A549 (cell line): ENCODE measurements at regions of chr19 and their contacts with region 1.

Region 1: DNA sequence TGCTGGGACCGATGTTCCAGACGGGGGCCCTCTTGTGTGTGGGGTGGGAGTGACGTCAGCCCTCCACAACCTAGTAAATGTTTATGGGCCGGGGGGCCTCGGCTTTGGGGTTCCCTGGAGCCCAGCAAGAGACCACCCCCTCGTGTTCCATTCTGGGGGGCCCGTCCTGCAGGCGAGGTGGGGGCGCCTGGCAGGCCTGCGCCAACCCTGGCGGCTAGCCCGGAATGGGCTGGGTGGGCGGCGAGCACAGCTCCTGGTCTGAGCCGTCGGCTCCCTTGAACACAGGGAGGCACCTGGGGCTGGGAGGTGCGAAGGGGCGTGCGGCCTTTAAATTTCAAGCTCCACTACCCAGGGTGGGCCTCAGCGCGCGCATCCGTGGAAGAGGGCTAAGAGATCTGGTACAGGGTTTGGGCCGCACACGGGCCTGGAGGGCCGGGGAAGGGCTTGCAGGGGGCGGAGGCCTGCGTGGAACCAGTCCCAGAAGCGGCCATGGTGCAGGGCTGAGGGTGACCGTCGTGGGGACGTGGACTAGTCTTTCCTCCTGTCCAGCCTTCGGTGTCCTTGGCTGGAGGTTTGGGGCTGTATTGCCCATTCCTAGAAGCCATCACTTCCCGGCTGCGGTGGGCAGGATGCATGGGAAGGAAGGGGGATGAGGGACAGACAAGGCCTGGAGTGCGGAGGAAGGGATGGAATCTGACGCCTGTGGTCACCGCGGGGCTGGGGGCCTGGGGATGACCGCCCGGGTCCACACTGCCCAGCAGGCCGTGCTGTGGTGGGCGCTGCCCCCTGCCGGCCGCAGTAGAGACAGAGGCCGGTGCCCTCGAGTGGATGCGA is 11.4 kb downstream of the NDUFA11 start:
- DNase-seq: peak; percentile 33 to 46
- ATAC-seq: peak; percentile 69 to 89
- H3K4me3 ChIP-seq: no peak overlapping the region
- H3K27ac ChIP-seq: peak overlapping the region in 1 of 2 experiments; percentile 50; a peak in 2 of 6 replicates
- H3K4me1 ChIP-seq: 0 out of 3 replicates have a peak, but pooled peaks cover 3% of the 10 kb centered on the region
- CTCF ChIP-seq: peak; percentile 64
- EP300 ChIP-seq: no peak
- POLR2A ChIP-seq: no peak
- RAD21 ChIP-seq: peak; percentile 72 to 80

Region 2: GRCh38 chr19:5775668-5776309 is 116.4 kb before region 1 on chr19:
- CTCF ChIA-PET with region 1: interaction called, 14 read pairs
- POLR2A ChIA-PET with region 1: no interaction called
- DNase-seq: peak in 1 of 2 experiments; percentile 37
- ATAC-seq: peak; percentile 18 to 49; a peak in 1 of 6 replicates
- H3K4me3 ChIP-seq: no peak overlapping the region
- H3K27ac ChIP-seq: no peak overlapping the region; a peak in 1 of 6 replicates
- H3K4me1 ChIP-seq: peaks cover 5% of the 10 kb centered on the region; the same call in 1 of the 3 replicates
- CTCF ChIP-seq: no peak
- EP300 ChIP-seq: no peak
- POLR2A ChIP-seq: no peak
- RAD21 ChIP-seq: no peak

Region 3: DNA sequence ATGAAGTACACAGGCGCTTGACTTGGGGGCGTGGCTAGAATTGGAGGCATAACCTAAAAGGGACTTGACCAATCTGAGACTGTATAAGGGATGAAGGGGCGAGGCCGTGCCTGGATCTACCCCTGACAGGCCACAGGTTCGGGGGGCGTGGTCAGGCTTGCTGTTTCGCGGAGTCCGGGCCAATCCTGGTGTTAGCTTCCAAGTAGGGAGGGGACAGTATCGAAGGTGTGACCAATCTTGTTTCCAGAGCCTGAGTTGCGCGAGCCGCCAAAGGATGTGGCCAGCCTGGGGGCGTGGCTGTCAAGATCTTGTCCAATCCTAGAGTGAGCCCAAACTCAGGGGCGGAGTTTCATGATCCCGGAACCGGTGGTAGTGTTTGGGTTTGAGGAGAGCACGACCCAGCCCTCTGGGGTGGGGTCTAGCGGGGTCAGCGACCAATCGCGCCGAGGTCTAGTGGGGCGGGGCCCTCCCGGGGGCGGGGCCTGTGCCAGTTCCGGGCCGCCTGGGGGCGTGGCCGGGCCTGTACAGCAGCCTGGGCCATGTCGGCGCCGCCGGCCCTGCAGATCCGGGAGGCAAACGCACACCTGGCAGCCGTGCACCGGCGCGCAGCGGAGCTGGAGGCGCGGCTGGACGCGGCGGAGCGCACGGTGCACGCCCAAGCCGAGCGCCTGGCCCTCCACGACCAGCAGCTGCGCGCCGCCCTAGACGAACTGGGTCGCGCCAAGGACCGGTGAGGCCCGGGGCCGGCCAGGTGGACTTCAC is 12.4 kb after region 1 on chr19 and contains the start of gene VMAC:
- CTCF ChIA-PET with region 1: interaction called, 19 read pairs
- POLR2A ChIA-PET with region 1: interaction called, 3 read pairs
- DNase-seq: peak; percentile 89 to 100
- ATAC-seq: peak; percentile 83 to 87
- H3K4me3 ChIP-seq: peak within 1 kb of the TSS; percentile 99
- H3K27ac ChIP-seq: peak within 1 kb of the TSS; percentile 95 to 98
- H3K4me1 ChIP-seq: peaks cover 5% of the 10 kb centered on the region; the same call in 1 of the 3 replicates
- CTCF ChIP-seq: no peak
- EP300 ChIP-seq: no peak
- POLR2A ChIP-seq: peak; percentile 47; the same call in 1 of the 2 replicates
- RAD21 ChIP-seq: no peak
- polyA plus RNA-seq, gene VMAC: 1.1 and 1.5 TPM in 2 replicates

Region 4: GRCh38 chr19:5961969-5962945 is 70.1 kb after region 1 on chr19:
- CTCF ChIA-PET with region 1: no interaction called
- POLR2A ChIA-PET with region 1: no interaction called
- DNase-seq: no peak
- ATAC-seq: no peak; a peak in 1 of 6 replicates
- H3K4me3 ChIP-seq: no peak overlapping the region
- H3K27ac ChIP-seq: no peak overlapping the region
- H3K4me1 ChIP-seq: peaks cover 6% of the 10 kb centered on the region; the same call in 1 of the 3 replicates
- CTCF ChIP-seq: no peak
- EP300 ChIP-seq: no peak
- POLR2A ChIP-seq: no peak
- RAD21 ChIP-seq: no peak